Activated CD8-positive, alpha-beta memory T cell treated with anti-CD3 and anti-CD28 coated beads, Interleukin-2, amount 10 ng/mL, durations not matched to agents 7 days and 5 days (primary cell): ENCODE measurements at regions of chr4 and their contacts with region 1.

Region 1: GRCh38 chr4:153127760-153128494 is 76.3 kb upstream of the TRIM2 start:
- DNase-seq: peak; percentile 85
- ATAC-seq: peak; percentile 80
- H3K4me3 Mint-ChIP-seq: no peak overlapping the region
- H3K27ac Mint-ChIP-seq: no peak overlapping the region
- H3K4me1 Mint-ChIP-seq: no peaks in the 10 kb centered on the region
- H3K27me3 Mint-ChIP-seq: peaks cover 57% of the 10 kb centered on the region

Region 2: GRCh38 chr4:152850377-152850776 is 277.6 kb before region 1 on chr4:
- CTCF ChIA-PET with region 1: interaction called, 27 read pairs
- DNase-seq: peak; percentile 50
- ATAC-seq: peak; percentile 23
- H3K4me3 Mint-ChIP-seq: no peak overlapping the region
- H3K27ac Mint-ChIP-seq: peak overlapping the region; percentile 9
- H3K4me1 Mint-ChIP-seq: peaks cover 14% of the 10 kb centered on the region
- H3K27me3 Mint-ChIP-seq: no peaks in the 10 kb centered on the region

Region 3: DNA sequence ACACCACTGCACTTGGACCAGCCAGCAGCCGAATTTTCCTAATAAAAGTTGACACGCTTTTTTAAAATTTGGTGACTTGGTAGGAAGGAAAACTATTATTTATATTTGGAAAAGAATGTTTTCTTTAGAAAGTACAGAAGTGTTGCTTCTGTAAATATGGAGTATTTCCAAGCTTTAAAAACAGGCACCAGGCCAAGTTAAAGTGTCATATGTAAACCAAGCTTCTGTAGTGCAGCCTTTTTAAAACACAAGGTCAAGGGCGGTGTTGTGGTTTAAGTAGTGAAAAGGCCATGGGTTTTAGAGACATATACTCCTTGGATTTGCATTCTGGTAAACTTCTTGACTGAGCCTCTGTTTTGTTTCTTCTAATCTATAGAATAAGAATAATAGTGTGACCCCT is 139.1 kb after region 1 on chr4:
- CTCF ChIA-PET with region 1: no interaction called
- DNase-seq: no peak
- ATAC-seq: no peak
- H3K4me3 Mint-ChIP-seq: no peak overlapping the region
- H3K27ac Mint-ChIP-seq: no peak overlapping the region
- H3K4me1 Mint-ChIP-seq: peaks cover 2% of the 10 kb centered on the region
- H3K27me3 Mint-ChIP-seq: peaks cover 2% of the 10 kb centered on the region

Region 4: GRCh38 chr4:153318696-153319320 is 190.9 kb after region 1 on chr4:
- CTCF ChIA-PET with region 1: no interaction called
- DNase-seq: no peak
- ATAC-seq: peak; percentile 36
- H3K4me3 Mint-ChIP-seq: no peak overlapping the region
- H3K27ac Mint-ChIP-seq: no peak overlapping the region
- H3K4me1 Mint-ChIP-seq: no peaks in the 10 kb centered on the region
- H3K27me3 Mint-ChIP-seq: peaks cover 22% of the 10 kb centered on the region